ENCODE measurements at regions of chr21 and their contacts with region 1.

Region 1: DNA sequence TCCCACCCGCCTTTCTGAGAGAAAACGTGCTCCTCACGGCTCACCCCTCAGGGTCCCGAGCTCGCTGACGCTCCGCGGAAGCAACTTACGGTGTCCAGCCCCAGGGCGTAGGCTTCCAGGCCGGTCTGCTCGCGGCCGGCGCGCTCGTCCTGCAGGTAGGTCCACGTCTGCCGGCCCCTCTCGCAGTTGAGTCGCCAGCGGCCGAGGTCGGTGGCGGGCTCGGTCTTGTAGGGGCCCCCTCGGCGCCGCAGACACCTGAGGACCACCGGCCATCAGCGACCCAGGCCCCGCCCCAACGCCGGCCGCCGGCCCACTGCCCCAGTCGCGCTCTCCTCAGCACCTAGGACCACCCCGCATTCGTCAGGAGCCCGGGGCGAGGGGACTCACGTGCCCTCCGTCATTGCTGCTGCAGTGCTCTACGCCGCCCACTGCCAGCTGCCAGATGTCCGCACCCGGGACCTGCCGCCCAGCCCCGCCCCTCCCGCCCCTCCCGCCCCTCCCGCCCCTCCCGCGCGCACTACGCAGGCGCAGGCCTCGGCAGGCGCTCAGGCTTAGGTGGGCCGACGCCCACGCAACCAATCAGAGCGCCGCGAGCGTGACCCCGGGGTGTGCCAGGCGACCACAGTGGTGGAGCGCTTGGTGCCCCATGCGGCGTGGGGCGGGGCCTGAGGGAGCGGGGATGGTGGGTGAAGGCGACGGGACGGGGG is at the start of gene LSS:
- DNase-seq: peak; percentile 98
- ATAC-seq: peak; percentile 95
- H3K4me3 Mint-ChIP-seq: peak within 1 kb of the TSS; percentile 77
- H3K27ac Mint-ChIP-seq: peak within 1 kb of the TSS; percentile 91
- H3K4me1 Mint-ChIP-seq: peaks cover 41% of the 10 kb centered on the region
- H3K27me3 Mint-ChIP-seq: no peaks in the 10 kb centered on the region
- total RNA-seq, gene LSS: 14.1 to 21.3 TPM

Region 2: DNA sequence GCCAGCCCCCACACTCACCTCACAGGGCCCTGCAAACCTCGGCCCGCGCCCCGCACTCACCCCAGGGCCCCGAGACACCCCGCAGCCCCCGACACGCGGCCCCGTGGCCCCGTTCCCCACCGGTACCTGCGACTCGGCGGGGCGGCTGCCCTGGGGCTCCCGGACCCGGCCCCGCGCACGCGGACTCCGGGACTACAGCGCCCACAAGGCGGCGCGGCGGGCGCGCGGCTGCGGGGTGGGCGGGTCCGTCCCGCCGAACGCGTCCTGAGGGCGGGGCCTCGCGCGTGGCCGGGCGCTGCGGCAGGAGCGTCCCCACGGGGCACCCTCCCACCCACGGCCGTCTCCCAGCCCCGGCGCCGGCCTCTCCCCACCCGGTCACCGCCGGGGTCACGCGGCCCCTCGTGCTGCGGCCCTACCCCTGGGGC is 686.2 kb before region 1 on chr21 and contains the start of gene SLC19A1:
- CTCF ChIA-PET with region 1: no interaction called
- POLR2A ChIA-PET with region 1: no interaction called
- intact Hi-C with region 1: loop called in 1 of 2 experiments (anchors 5 kb)
- DNase-seq: peak; percentile 86
- ATAC-seq: peak; percentile 86
- H3K4me3 Mint-ChIP-seq: peak within 1 kb of the TSS; percentile 80
- H3K27ac Mint-ChIP-seq: peak within 1 kb of the TSS; percentile 80
- H3K4me1 Mint-ChIP-seq: peaks cover 20% of the 10 kb centered on the region
- H3K27me3 Mint-ChIP-seq: no peaks in the 10 kb centered on the region
- total RNA-seq, gene SLC19A1: 46.1 to 50.0 TPM

Region 3: GRCh38 chr21:45981151-45982089 is 247.1 kb before region 1 on chr21 and contains the start of gene COL6A1:
- CTCF ChIA-PET with region 1: no interaction called
- POLR2A ChIA-PET with region 1: no interaction called
- intact Hi-C with region 1: loop called in 1 of 2 experiments (anchors 1 kb)
- DNase-seq: peak; percentile 77
- ATAC-seq: peak; percentile 56
- H3K4me3 Mint-ChIP-seq: peak within 1 kb of the TSS; percentile 10
- H3K27ac Mint-ChIP-seq: no peak within 1 kb of the TSS
- H3K4me1 Mint-ChIP-seq: peaks cover 8% of the 10 kb centered on the region
- H3K27me3 Mint-ChIP-seq: peaks cover 4% of the 10 kb centered on the region
- total RNA-seq, gene COL6A1: 0.57 to 0.69 TPM

Region 4: DNA sequence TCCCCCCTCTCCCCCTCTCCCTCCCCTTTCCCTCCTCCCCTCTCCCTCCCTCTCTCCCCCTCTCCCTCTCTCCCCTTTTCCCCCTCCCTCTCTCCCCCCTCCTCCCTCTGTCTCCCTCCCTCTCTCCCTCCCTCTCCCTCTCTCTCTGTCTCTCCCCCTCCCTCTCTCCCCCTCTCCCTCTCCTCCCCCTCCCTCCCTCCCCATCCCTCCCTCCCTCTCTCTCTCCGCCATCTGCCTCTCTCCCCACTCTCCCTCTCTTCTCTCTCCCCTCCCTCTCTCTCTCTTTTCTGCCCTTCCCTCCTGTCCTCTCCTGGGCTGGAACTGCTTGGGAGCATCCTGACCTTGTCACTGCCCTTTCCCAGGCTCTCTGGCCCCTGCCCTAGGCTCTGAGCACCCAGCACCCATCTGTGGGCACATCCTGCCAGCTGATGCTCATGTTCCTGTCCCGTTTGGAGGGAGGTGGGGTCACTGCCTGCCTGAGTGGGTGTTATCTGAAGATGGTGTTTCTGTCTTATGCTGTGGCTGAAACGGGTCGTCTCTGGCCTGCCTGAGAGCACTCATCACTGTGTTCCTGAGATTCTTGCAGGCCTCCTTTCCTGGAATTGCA is 83.9 kb before region 1 on chr21:
- CTCF ChIA-PET with region 1: interaction called, 4 read pairs
- POLR2A ChIA-PET with region 1: no interaction called
- intact Hi-C with region 1: loop called (anchors 1 kb)
- DNase-seq: peak; percentile 40
- ATAC-seq: no peak
- H3K4me3 Mint-ChIP-seq: no peak overlapping the region
- H3K27ac Mint-ChIP-seq: peak overlapping the region; percentile 34
- H3K4me1 Mint-ChIP-seq: peaks cover 12% of the 10 kb centered on the region
- H3K27me3 Mint-ChIP-seq: no peaks in the 10 kb centered on the region

Region 5: GRCh38 chr21:46253610-46254124 is 25.2 kb after region 1 on chr21:
- CTCF ChIA-PET with region 1: interaction called, 3 read pairs
- POLR2A ChIA-PET with region 1: no interaction called
- intact Hi-C with region 1: loop called in 1 of 2 experiments (anchors 2 kb)
- DNase-seq: peak; percentile 72
- ATAC-seq: peak; percentile 95
- H3K4me3 Mint-ChIP-seq: no peak overlapping the region
- H3K27ac Mint-ChIP-seq: peak overlapping the region; percentile 89
- H3K4me1 Mint-ChIP-seq: peaks cover 39% of the 10 kb centered on the region
- H3K27me3 Mint-ChIP-seq: no peaks in the 10 kb centered on the region

Region 6: GRCh38 chr21:46458315-46459023 is 230.0 kb after region 1 on chr21 and contains the start of gene DIP2A:
- CTCF ChIA-PET with region 1: no interaction called
- POLR2A ChIA-PET with region 1: no interaction called
- intact Hi-C with region 1: loop called in 1 of 2 experiments (anchors 1 kb)
- DNase-seq: peak; percentile 96
- ATAC-seq: peak; percentile 98
- H3K4me3 Mint-ChIP-seq: peak within 1 kb of the TSS; percentile 91
- H3K27ac Mint-ChIP-seq: peak within 1 kb of the TSS; percentile 84
- H3K4me1 Mint-ChIP-seq: peaks cover 41% of the 10 kb centered on the region
- H3K27me3 Mint-ChIP-seq: no peaks in the 10 kb centered on the region
- total RNA-seq, gene DIP2A: 25.2 to 27.7 TPM

Region 7: GRCh38 chr21:46477765-46478164 is 249.3 kb after region 1 on chr21:
- CTCF ChIA-PET with region 1: no interaction called
- POLR2A ChIA-PET with region 1: no interaction called
- intact Hi-C with region 1: no loop called
- DNase-seq: no peak
- ATAC-seq: no peak
- H3K4me3 Mint-ChIP-seq: no peak overlapping the region
- H3K27ac Mint-ChIP-seq: no peak overlapping the region
- H3K4me1 Mint-ChIP-seq: peaks cover 17% of the 10 kb centered on the region
- H3K27me3 Mint-ChIP-seq: no peaks in the 10 kb centered on the region

Measured in activated CD4-positive, alpha-beta T cell treated with anti-CD3 and anti-CD28 coated beads for 36 hours (primary cell).